Prostate gland (tissue), 2 donors: ENCODE measurements at regions of chr5 and their contacts with region 1.

Region 1: GRCh38 chr5:54946306-54946819 is 39.0 kb downstream of the ESM1 start:
- DNase-seq: no peak
- H3K4me3 ChIP-seq: no peak overlapping the region
- H3K27ac ChIP-seq: no peak overlapping the region
- H3K4me1 ChIP-seq: no peaks in the 10 kb centered on the region
- H3K27me3 ChIP-seq: no peaks in the 10 kb centered on the region
- CTCF ChIP-seq: no peak
- POLR2A ChIP-seq: no peak

Region 2: GRCh38 chr5:54651482-54652076 is 294.8 kb before region 1 on chr5:
- intact Hi-C with region 1: no loop called
- DNase-seq: no peak
- H3K4me3 ChIP-seq: no peak overlapping the region
- H3K27ac ChIP-seq: no peak overlapping the region
- H3K4me1 ChIP-seq: no peaks in the 10 kb centered on the region
- H3K27me3 ChIP-seq: no peaks in the 10 kb centered on the region
- CTCF ChIP-seq: no peak
- POLR2A ChIP-seq: no peak

Region 3: GRCh38 chr5:55146543-55147151 is 200.3 kb after region 1 on chr5:
- intact Hi-C with region 1: loop called (anchors 5 kb)
- DNase-seq: peak; percentile 83
- H3K4me3 ChIP-seq: no peak overlapping the region
- H3K27ac ChIP-seq: no peak overlapping the region
- H3K4me1 ChIP-seq: no peaks in the 10 kb centered on the region
- H3K27me3 ChIP-seq: peaks cover 2% of the 10 kb centered on the region
- CTCF ChIP-seq: peak; percentile 77 to 81 (median 80)
- POLR2A ChIP-seq: no peak